ENCODE measurements at regions of chr16 and their contacts with region 1.

Region 1: GRCh38 chr16:85448557-85449197 is 164.4 kb upstream of the GSE1 start:
- DNase-seq: peak; percentile 79
- ATAC-seq: peak; percentile 91
- H3K4me3 ChIP-seq: peak overlapping the region in 2 of 3 experiments; percentile 21 to 59; a peak in 3 of 6 replicates
- H3K27ac ChIP-seq: peak overlapping the region; percentile 68
- H3K4me1 ChIP-seq: peaks cover 59% of the 10 kb centered on the region
- H3K27me3 ChIP-seq: peaks cover 5 to 59% of the 10 kb centered on the region in 2 experiments
- CTCF ChIP-seq: peak; percentile 44; the same call in 1 of the 2 replicates
- EP300 ChIP-seq: peak in 1 of 2 experiments; percentile 85; a peak in 2 of 4 replicates
- POLR2A ChIP-seq: no peak
- RAD21 ChIP-seq: peak; percentile 20; the same call in 1 of the 2 replicates

Region 2: GRCh38 chr16:85465968-85466700 is 17.5 kb after region 1 on chr16:
- CTCF ChIA-PET with region 1: no interaction called
- POLR2A ChIA-PET with region 1: interaction called, 6 read pairs
- in situ Hi-C with region 1: no loop called
- intact Hi-C with region 1: loop called (anchors 1 kb)
- DNase-seq: peak; percentile 56
- ATAC-seq: peak; percentile 5; the same call in 1 of the 3 replicates
- H3K4me3 ChIP-seq: no peak overlapping the region
- H3K27ac ChIP-seq: no peak overlapping the region
- H3K4me1 ChIP-seq: peaks cover 47% of the 10 kb centered on the region
- H3K27me3 ChIP-seq: peaks cover 31 to 66% of the 10 kb centered on the region in 2 experiments
- CTCF ChIP-seq: no peak
- EP300 ChIP-seq: no peak
- POLR2A ChIP-seq: no peak
- RAD21 ChIP-seq: no peak